Mammary epithelial cell (primary cell): ENCODE measurements at regions of chr11 and their contacts with region 1.

Region 1: DNA sequence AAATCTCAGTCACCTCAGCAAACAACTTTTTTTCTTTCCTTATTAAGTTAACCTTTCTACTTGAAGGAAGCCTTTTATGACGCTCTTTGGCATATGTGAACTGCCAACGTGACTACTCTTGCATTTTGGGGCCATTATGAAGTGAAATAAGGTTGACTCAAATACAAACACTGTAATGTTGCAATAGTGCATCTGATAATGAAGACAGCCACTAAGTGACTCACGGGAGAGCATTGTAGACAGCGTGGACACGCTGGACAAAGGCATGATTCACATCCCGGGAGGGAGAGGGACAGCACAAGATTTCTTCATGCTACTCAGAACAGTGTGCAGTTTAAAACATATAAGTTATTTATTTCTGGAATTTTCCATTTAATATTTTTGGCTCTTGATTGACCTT is 560.8 kb downstream of the ETS1 start:
- DNase-seq: peak; percentile 99
- H3K4me3 ChIP-seq: no peak overlapping the region
- H3K27ac ChIP-seq: peak overlapping the region; percentile 87
- H3K4me1 ChIP-seq: peaks cover 31% of the 10 kb centered on the region
- H3K27me3 ChIP-seq: no peaks in the 10 kb centered on the region
- CTCF ChIP-seq: no peak

Region 2: GRCh38 chr11:127859941-127860354 is 166.6 kb before region 1 on chr11:
- CTCF ChIA-PET with region 1: no interaction called
- dilution Hi-C with region 1: no loop called
- in situ Hi-C with region 1: no loop called
- intact Hi-C with region 1: loop called (anchors 1 kb)
- DNase-seq: peak; percentile 46
- H3K4me3 ChIP-seq: no peak overlapping the region
- H3K27ac ChIP-seq: peak overlapping the region; percentile 47
- H3K4me1 ChIP-seq: peaks cover 24% of the 10 kb centered on the region
- H3K27me3 ChIP-seq: no peaks in the 10 kb centered on the region
- CTCF ChIP-seq: no peak

Region 3: DNA sequence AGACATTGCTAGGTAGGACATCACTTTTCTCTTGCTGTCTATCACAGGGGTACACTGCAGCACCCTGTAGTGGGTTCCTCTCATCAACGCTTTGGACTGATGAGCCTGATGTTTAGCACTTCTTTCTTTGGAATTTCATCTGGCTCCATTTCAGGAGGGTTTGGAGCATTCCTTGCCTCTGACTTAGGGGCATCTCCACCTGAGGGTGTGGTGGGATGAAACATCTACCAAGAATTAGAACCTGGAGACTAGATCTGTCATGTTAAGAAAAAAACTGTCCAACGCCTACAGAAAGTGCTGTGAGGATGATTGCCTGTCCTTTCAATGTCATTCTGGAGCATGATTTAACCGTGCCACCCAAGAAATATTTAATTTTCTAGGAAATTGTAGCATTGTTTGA is 87.6 kb before region 1 on chr11:
- CTCF ChIA-PET with region 1: no interaction called
- dilution Hi-C with region 1: no loop called
- in situ Hi-C with region 1: loop called in 1 of 2 experiments (anchors 10 kb)
- intact Hi-C with region 1: loop called (anchors 1 kb)
- DNase-seq: peak; percentile 75
- H3K4me3 ChIP-seq: no peak overlapping the region
- H3K27ac ChIP-seq: peak overlapping the region; percentile 76
- H3K4me1 ChIP-seq: peaks cover 27% of the 10 kb centered on the region
- H3K27me3 ChIP-seq: no peaks in the 10 kb centered on the region
- CTCF ChIP-seq: no peak

Region 4: GRCh38 chr11:127950162-127950561 is 76.4 kb before region 1 on chr11:
- CTCF ChIA-PET with region 1: no interaction called
- dilution Hi-C with region 1: no loop called
- in situ Hi-C with region 1: no loop called
- intact Hi-C with region 1: no loop called
- DNase-seq: no peak
- H3K4me3 ChIP-seq: no peak overlapping the region
- H3K27ac ChIP-seq: no peak overlapping the region
- H3K4me1 ChIP-seq: no peaks in the 10 kb centered on the region
- H3K27me3 ChIP-seq: no peaks in the 10 kb centered on the region
- CTCF ChIP-seq: no peak

Region 5: GRCh38 chr11:127993788-127994187 is 32.8 kb before region 1 on chr11:
- CTCF ChIA-PET with region 1: no interaction called
- dilution Hi-C with region 1: no loop called
- in situ Hi-C with region 1: no loop called
- intact Hi-C with region 1: no loop called
- DNase-seq: no peak
- H3K4me3 ChIP-seq: no peak overlapping the region
- H3K27ac ChIP-seq: no peak overlapping the region
- H3K4me1 ChIP-seq: peaks cover 10% of the 10 kb centered on the region
- H3K27me3 ChIP-seq: no peaks in the 10 kb centered on the region
- CTCF ChIP-seq: no peak

Region 6: DNA sequence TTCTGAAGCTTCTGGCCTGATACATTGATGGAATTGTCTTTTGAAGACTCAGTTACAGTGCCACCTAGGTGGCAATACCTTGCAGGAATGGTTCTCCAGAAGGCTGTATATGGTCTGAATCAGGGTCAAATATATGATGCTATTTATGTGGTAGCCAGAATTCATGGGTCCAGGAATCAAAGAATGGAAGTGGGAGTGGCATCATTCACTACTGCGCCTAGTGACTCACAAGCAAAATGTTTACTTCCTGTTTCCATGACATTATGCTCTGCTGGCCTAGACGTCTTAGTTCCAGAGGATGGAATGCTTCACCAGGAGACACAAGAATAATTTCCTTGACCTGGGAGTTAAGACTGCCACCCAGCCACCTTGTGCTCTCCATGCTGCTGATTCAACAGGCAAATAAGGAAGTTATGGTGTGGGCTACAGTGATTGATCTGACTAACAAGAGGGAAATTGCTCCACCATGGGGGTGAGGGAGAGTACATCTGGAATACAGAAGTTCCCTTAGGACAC is 68.9 kb after region 1 on chr11:
- CTCF ChIA-PET with region 1: no interaction called
- dilution Hi-C with region 1: no loop called
- in situ Hi-C with region 1: no loop called
- intact Hi-C with region 1: no loop called
- DNase-seq: peak; percentile 83
- H3K4me3 ChIP-seq: no peak overlapping the region
- H3K27ac ChIP-seq: peak overlapping the region; percentile 75
- H3K4me1 ChIP-seq: peaks cover 12% of the 10 kb centered on the region
- H3K27me3 ChIP-seq: no peaks in the 10 kb centered on the region
- CTCF ChIP-seq: peak; percentile 23 to 32

Region 7: DNA sequence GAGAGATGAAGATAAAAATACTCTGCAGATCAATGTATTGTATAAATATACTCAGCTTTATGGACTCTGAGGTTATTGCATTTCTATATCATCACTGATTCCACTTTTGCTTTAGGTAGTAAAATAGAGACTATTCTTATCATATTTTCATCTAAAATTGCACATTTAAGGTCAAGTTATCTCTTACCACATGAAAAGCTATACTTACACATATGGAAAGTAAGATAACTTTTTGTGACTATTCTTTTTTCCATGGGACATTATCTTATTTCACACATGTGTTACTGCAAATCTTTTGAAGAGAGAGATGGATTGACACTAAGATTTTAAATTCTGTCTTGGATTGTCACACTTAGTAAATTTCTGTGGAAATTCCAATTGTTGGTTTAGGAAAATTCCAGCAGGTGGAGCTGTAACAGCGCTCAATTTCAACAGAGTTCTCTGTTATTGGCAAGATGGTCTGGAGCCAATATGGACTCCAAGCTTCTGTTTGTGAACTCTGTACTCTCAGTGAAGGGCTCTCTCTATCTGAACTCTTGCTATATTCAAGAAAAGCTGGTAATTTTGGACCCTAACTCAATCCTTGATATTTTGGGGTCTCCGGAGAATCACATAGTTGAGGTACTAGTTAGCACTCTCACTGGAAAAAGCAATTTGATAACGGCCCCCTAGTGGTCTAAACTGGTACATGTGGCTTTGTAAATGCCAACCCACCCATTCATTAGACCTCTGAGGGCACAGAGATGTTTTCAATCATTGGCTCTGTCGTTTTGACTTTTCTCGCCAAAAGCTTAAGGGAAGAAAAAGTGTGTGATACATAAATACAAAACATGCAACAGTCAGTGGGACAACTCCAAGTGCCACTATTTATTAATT is 131.1 kb after region 1 on chr11:
- CTCF ChIA-PET with region 1: no interaction called
- dilution Hi-C with region 1: no loop called
- in situ Hi-C with region 1: loop called in 1 of 2 experiments (anchors 10 kb)
- intact Hi-C with region 1: loop called (anchors 1 kb)
- DNase-seq: peak; percentile 67
- H3K4me3 ChIP-seq: peak overlapping the region in 2 of 3 experiments; percentile 13 to 26
- H3K27ac ChIP-seq: peak overlapping the region; percentile 11
- H3K4me1 ChIP-seq: no peaks in the 10 kb centered on the region
- H3K27me3 ChIP-seq: no peaks in the 10 kb centered on the region
- CTCF ChIP-seq: peak; percentile 73 to 76

Region 8: DNA sequence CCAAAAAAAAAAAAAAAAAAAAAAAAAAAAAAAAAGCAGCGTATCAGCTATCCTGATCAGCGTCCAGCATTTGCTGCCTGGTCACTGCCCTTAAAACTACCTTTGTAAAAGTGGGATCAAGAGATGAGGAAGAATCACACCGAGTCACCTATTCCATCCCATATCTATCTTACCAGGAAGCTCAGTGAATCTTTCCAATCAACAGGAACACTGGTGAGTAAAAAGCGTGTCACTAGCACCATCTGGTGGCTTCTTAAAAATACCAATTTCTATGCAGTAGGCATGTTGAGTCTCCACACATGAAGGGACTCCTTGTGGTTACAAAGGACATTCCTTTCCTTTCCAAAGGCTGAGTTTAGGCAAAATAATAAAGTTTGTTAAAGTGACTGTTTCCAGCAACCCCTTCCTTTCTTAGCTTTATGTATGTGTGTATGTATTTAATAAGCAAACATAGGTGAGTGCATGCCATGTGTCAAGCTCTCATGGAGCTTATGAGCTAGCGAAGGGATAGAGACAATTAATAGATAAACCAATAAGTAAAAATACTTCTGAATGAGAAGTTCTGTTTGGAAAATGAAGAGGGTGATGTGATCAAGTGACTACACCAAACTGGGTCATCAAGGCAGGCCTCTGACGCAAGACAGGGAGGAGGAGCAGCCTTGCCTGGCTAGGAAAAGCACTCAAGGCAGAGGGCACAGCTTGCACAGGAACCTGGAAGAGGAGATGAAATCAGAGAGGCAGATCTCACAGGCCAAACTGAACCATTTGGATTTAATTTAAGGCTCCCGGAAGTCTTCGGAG is 930.0 kb after region 1 on chr11:
- CTCF ChIA-PET with region 1: no interaction called
- dilution Hi-C with region 1: no loop called
- in situ Hi-C with region 1: loop called in 1 of 2 experiments (anchors 25 kb)
- intact Hi-C with region 1: loop called (anchors 1 kb)
- DNase-seq: peak; percentile 64
- H3K4me3 ChIP-seq: no peak overlapping the region
- H3K27ac ChIP-seq: no peak overlapping the region
- H3K4me1 ChIP-seq: peaks cover 6% of the 10 kb centered on the region
- H3K27me3 ChIP-seq: no peaks in the 10 kb centered on the region
- CTCF ChIP-seq: peak; percentile 65 to 73